KBM-7 (cell line): ENCODE measurements at regions of chr9 and their contacts with region 1.

Region 1: GRCh38 chr9:124855944-124856773 is 2.9 kb downstream of the WDR38 start:
- DNase-seq: peak; percentile 67

Region 2: DNA sequence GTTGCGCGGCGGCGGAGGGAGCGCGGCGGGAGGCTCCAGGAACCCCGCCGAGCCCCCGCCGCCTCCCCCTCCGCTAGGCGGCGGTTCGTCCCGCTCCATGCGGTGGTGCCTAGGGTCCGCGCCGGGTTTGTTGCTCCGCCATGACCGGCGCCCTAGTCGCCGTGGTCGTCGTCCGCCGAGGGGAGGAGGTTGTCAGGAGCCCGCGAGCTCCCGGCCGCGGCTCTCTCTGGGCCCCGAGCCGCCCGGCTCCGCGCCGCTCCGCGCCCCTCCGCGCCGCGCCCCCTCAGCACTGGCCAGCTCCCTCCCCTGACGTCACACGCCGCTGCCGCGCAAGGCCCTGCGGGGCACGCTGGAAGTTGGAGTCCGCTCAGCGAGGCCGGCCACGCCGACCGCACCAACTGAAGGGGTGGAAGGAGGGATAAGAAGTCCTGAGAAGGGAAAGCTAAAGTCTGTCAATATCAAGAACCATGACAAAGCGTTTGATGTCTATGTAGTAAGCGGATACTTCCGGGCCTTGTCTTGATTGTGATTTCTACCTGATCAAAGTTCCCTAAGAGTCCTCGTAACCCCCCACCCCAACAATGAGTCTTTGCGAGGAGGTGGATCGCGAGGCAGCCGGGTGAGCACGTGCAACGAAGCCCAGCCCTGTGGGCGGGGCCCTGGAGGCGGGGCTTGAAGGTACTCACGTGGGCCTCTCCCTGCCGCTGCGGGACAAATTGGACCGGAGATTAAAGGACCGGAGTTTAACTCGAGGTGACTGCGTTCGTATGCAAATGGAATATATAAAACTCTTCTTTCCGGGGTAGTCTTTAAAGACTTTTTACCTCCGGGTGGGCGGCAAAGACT is 84.9 kb before region 1 on chr9 and contains the start of gene NR6A1:
- in situ Hi-C with region 1: loop called (anchors 5 kb)
- DNase-seq: peak; percentile 97

Region 3: GRCh38 chr9:124800306-124801259 is 55.6 kb before region 1 on chr9:
- in situ Hi-C with region 1: no loop called
- DNase-seq: no peak

Region 4: DNA sequence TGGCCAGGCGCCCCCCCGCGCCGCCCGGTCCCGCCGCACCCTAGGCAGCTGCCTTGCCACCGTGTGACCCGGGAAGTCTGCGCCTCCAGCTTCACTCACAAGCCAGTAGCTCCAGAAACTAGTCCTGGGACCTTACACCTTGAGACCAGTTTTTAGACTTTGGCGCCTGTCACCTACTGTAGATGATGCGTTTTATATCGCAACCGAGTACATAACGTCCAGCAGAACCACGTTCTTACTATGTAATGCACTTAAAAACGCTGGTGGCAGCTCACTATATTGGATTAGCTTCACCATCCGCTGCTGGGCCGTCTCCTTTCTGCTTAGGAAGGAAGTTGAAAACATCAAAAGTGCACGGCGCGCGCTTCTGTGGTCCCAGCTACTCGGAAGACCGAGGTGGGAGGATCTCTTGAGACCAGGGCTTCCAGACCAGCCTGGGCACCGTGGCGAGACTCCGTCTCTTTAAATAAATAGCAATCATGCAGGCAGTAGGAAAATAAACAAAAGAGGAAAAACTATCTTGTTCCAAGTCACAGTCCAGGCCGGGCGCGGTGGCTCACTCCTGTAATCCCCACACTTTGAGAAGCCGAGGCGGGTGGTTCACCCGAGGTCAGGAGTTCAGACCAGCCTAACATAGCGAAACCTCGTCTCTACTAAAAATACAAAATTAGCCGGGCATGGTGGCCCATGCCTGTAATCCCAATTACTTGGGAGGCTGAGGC is 85.5 kb after region 1 on chr9:
- in situ Hi-C with region 1: no loop called
- DNase-seq: peak; percentile 77